HepG2 (cell line): ENCODE measurements at regions of chr1 and their contacts with region 1.

Region 1: DNA sequence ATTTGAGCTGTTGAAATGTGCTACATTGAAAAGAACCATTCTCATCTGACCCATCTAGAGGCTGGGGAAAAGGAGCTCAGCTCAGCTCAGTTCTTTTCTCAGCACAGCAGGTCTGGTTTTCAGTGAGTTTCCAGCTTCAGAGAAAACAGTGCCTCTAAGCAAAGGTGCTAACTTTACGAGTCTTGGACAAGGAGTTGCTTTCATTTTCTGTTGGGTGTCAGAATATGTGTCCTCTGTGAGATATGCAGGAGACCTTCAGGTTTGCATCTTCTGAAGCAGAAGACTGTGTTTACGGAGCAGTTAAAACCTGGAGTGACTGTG is 321.3 kb upstream of the USP24 start:
- DNase-seq: no peak
- ATAC-seq: no peak
- H3K4me3 ChIP-seq: no peak overlapping the region
- H3K27ac ChIP-seq: peak overlapping the region; percentile 21
- H3K4me1 ChIP-seq: peaks cover 54% of the 10 kb centered on the region
- H3K27me3 ChIP-seq: no peaks in the 10 kb centered on the region
- CTCF ChIP-seq: no peak
- EP300 ChIP-seq: no peak
- POLR2A ChIP-seq: no peak
- RAD21 ChIP-seq: no peak

Region 2: DNA sequence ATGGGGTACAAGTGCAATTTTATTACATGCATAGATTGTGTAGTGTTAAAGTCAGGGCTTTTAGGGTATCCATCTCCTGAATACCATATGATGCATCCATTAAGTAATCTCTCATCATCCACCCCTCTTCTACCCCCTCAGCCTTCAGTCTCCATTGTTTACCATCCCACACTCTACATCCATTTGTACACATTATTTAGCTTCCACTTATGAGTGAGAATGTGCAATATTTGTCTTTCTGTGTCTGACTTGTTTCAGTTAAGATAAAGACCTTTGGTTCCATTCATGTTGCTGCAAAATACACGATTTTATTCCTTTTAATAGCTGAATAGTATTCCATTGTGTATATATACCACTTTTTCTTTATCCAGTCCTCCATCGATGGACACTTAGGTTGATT is 98.8 kb before region 1 on chr1:
- CTCF ChIA-PET with region 1: no interaction called
- POLR2A ChIA-PET with region 1: no interaction called
- in situ Hi-C with region 1: loop called (anchors 10 kb)
- intact Hi-C with region 1: no loop called
- DNase-seq: peak; percentile 71
- ATAC-seq: no peak
- H3K4me3 ChIP-seq: no peak overlapping the region
- H3K27ac ChIP-seq: no peak overlapping the region
- H3K4me1 ChIP-seq: peaks cover 23% of the 10 kb centered on the region
- H3K27me3 ChIP-seq: no peaks in the 10 kb centered on the region
- CTCF ChIP-seq: no peak
- EP300 ChIP-seq: peak in 1 of 2 experiments; percentile 55; a peak in 1 of 4 replicates
- POLR2A ChIP-seq: no peak
- RAD21 ChIP-seq: no peak